Right lobe of liver (tissue), 6 donors: ENCODE measurements at regions of chr18 and their contacts with region 1.

Region 1: DNA sequence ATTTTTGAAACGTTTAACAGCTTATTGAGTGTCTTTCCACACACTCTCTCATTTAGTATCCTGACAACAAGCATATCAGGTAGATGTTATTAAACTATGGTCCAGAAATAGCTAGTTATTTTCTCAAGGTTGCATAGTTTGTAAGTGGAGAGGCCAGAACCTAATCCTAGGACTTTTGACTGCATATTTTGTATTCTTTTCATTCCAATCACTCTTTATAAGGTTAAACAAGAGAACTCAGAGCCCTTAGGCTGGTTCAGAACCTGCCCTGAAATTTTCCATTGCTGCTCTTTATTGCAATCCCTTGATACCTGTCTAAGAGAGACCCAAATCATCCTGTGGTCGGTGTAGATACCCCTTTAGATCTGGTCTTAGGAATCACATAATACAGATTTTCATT is 372.6 kb upstream of the TCF4 start:
- DNase-seq: no peak
- ATAC-seq: no peak
- H3K4me3 ChIP-seq: no peak overlapping the region
- H3K27ac ChIP-seq: no peak overlapping the region
- H3K4me1 ChIP-seq: no peaks in the 10 kb centered on the region
- H3K27me3 ChIP-seq: no peaks in the 10 kb centered on the region
- CTCF ChIP-seq: no peak
- POLR2A ChIP-seq: no peak

Region 2: DNA sequence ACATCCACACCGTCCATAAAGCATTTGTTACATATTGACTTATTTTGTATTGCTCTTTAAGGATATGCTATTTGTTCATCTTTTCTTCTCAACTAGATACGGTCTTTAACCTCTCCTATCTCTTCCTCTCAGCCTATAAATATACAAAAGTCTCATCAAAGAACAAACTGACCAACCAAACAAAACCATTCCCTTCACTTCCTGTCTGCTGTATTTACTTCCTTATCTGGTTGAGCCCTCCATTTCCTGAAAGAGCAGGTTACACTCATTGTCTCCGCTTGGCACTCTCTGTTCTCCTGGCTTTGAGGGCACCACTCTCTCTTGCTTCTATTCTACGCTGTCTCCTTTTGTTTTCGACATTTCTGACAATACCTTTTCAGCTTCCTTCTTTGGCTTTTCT is 59.3 kb after region 1 on chr18:
- intact Hi-C with region 1: loop called in 1 of 2 experiments (anchors 5 kb)
- DNase-seq: no peak
- ATAC-seq: no peak
- H3K4me3 ChIP-seq: no peak overlapping the region
- H3K27ac ChIP-seq: no peak overlapping the region
- H3K4me1 ChIP-seq: no peaks in the 10 kb centered on the region
- H3K27me3 ChIP-seq: no peaks in the 10 kb centered on the region
- CTCF ChIP-seq: no peak
- POLR2A ChIP-seq: no peak